Ascending aorta (tissue), 2 donors: ENCODE measurements at regions of chr14 and their contacts with region 1.

Region 1: DNA sequence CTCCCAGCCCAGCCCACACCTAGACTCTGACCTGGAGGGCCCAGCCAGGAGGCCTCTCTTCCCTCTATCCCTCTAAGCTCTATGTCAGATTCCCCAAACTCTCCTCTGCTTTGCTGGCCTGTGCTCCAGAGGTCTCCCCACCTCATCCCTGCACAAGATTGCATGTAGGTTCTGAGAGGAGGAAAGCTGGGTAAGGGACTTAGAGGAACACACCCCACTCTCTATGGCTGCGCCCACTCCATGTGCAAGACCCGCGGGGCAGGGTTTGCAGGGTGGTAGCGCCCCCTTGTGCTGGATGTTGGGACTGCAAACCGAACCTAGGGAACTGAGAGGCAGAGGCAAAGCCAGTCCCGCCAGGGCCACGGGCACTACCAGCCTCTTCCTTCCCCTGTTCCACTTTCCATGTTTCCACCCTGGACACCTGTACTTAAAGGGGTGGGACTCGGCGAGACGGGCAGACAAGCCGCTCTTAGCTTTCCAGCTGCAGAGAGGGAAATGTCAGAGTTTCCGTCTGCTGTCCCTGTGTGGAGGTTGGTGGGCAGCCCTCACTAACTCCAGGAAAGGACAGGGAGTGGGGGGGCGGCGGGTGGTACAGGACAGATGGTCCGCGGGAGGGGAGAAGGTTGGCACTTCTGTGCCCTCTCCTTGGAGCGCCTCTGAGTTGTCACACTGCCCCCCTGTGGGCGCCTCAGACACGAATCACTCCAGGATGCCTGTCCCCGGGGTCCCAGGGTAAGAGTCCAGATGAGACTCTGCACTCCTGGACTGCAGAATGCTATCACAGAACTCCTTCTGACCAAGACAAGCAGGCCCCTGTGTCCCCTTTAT is 16.8 kb downstream of the MMP14 start:
- DNase-seq: peak; percentile 58 to 96
- H3K4me3 ChIP-seq: peak overlapping the region; percentile 42 to 66
- H3K27ac ChIP-seq: peak overlapping the region; percentile 87 to 91
- H3K4me1 ChIP-seq: peaks cover 36 to 43% of the 10 kb centered on the region in 2 donors
- H3K27me3 ChIP-seq: no peaks in the 10 kb centered on the region
- CTCF ChIP-seq: peak; percentile 87 to 95 (median 93)

Region 2: DNA sequence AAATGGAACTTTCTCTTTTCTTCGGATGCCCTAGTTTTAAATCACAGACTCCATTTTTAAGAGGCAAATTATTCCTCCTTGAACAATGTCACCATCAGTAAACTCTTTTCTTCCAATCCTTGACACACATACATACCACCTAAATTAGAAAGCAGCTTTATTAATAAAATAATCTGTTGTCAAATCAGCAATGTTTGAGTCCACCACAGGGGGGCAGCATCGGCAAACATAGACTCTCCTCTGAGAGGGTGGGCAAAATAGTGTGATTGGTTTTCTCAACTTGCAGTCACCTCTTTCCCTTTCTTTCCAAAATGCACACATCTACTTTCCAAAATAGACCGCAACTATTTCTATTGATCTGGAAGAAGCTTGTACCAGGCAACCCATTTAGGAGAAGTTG is 741.1 kb before region 1 on chr14:
- intact Hi-C with region 1: no loop called
- DNase-seq: no peak
- H3K4me3 ChIP-seq: no peak overlapping the region
- H3K27ac ChIP-seq: no peak overlapping the region
- H3K4me1 ChIP-seq: no peaks in the 10 kb centered on the region
- H3K27me3 ChIP-seq: no peaks in the 10 kb centered on the region
- CTCF ChIP-seq: no peak

Region 3: DNA sequence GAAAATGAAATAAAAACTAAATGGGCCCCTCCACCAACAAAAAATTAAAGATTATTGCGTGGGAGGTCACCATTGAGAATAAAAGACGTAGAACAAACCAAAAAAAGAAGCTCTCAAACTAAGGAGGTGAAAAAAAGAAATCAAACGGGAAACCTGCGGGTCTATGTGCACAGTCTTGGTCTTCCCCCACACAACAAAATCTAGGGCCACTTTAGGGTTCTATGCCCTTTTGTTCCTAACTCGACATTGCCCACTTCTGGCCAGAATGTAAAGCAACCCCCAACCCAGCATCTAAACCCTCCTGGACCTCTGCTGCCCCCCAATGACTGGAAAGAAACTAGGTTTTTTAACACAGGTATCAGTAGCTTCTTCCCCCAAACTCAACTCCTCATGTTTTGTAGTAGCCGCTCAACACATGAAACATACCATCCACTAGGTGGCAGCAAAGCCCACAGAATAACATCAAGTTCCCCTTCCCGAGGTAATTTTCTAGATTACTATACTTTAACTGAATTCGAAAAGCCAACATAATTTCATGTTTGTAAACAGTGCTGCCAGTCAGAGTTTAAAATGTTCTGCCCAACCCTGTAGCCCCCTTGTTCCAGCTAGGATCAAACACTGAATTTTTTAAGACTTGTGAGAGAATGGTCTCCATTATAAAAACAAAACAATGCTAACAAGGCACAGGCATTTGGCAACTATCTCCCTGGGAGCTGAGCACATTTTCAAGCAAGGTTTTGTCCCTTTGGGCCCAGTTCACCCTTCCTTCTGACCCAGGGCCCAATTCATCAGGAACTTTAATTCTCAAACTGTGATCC is 282.8 kb before region 1 on chr14:
- intact Hi-C with region 1: loop called (anchors 1 kb)
- DNase-seq: peak in 1 of 2 donors; percentile 90
- H3K4me3 ChIP-seq: no peak overlapping the region
- H3K27ac ChIP-seq: peak overlapping the region; percentile 21 to 55
- H3K4me1 ChIP-seq: peaks cover 0 to 9% of the 10 kb centered on the region in 2 donors
- H3K27me3 ChIP-seq: no peaks in the 10 kb centered on the region
- CTCF ChIP-seq: peak; percentile 69 to 88 (median 74)

Region 4: GRCh38 chr14:22589096-22589839 is 263.9 kb before region 1 on chr14 and contains the start of gene DAD1:
- intact Hi-C with region 1: loop called (anchors 2 kb)
- DNase-seq: peak; percentile 98 to 100
- H3K4me3 ChIP-seq: peak within 1 kb of the TSS; percentile 67 to 76
- H3K27ac ChIP-seq: peak within 1 kb of the TSS; percentile 88 to 95
- H3K4me1 ChIP-seq: peaks cover 0 to 21% of the 10 kb centered on the region in 2 donors
- H3K27me3 ChIP-seq: no peaks in the 10 kb centered on the region
- CTCF ChIP-seq: peak in 1 of 3 experiments; percentile 34
- total RNA-seq, gene DAD1: 186 TPM

Region 5: DNA sequence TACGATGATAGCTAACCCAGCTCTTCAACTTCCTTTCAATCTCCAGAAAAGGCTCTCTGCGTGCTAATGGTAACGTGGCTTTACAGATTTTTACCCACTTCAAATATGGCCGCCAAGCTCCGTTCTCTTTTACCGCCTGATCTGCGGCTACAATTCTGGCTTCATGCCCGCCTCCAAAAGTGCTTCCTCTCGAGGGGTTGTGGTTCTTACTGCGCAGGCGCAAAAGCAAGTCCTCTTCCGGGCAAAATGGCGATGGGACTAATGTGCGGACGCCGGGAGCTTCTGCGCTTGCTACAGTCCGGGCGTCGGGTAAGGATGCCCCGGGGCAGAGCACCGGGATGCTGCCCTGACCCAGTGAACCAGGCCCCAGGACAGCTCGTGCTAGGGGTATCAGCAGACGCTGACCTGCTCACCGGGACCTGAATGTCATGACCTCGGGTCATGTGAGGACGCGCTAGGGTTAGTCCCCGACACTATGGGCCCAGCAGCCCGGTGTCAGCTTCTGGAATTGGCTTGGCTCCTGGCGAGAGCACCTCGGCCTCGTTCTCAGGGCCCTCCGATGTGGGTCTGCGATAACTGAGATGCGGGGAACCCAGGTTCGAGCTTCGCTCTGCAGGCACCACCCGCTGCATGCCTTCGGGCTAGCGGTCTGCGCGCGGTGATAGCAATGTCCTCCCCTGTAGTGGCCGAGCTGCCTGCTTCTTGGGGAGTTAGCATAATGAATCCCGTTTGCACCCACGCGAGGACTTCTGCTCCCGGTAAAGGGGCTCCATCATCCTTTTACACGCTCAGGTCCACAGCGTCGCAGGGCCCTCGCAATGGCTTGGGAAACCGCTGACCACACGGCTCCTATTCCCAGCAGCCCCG is 86.5 kb before region 1 on chr14 and contains the start of gene OXA1L:
- intact Hi-C with region 1: loop called (anchors 10 kb)
- DNase-seq: peak; percentile 89 to 98
- H3K4me3 ChIP-seq: peak within 1 kb of the TSS; percentile 84 to 94
- H3K27ac ChIP-seq: peak within 1 kb of the TSS; percentile 78 to 85
- H3K4me1 ChIP-seq: peaks cover 0 to 19% of the 10 kb centered on the region in 2 donors
- H3K27me3 ChIP-seq: no peaks in the 10 kb centered on the region
- CTCF ChIP-seq: no peak
- total RNA-seq, gene OXA1L: 68.3 TPM

Region 6: GRCh38 chr14:22836301-22837113 is 16.6 kb before region 1 on chr14 and contains the start of gene MMP14:
- intact Hi-C with region 1: loop called (anchors 1 kb)
- DNase-seq: peak; percentile 67 to 94
- H3K4me3 ChIP-seq: peak within 1 kb of the TSS; percentile 68 to 86
- H3K27ac ChIP-seq: peak within 1 kb of the TSS; percentile 91 to 94
- H3K4me1 ChIP-seq: peaks cover 0 to 20% of the 10 kb centered on the region in 2 donors
- H3K27me3 ChIP-seq: no peaks in the 10 kb centered on the region
- CTCF ChIP-seq: peak in 2 of 3 experiments; percentile 51 to 85
- total RNA-seq, gene MMP14: 178 TPM

Region 7: GRCh38 chr14:23528555-23528954 is 675.4 kb after region 1 on chr14:
- intact Hi-C with region 1: no loop called
- DNase-seq: no peak
- H3K4me3 ChIP-seq: no peak overlapping the region
- H3K27ac ChIP-seq: no peak overlapping the region
- H3K4me1 ChIP-seq: no peaks in the 10 kb centered on the region
- H3K27me3 ChIP-seq: no peaks in the 10 kb centered on the region
- CTCF ChIP-seq: no peak